AG04450 (cell line): ENCODE measurements at regions of chr12 and their contacts with region 1.

Region 1: GRCh38 chr12:14884458-14884878 is 1.2 kb downstream of the MGP start:
- DNase-seq: peak; percentile 36
- H3K4me3 ChIP-seq: no peak overlapping the region
- H3K27ac ChIP-seq: no peak overlapping the region
- H3K27me3 ChIP-seq: no peaks in the 10 kb centered on the region
- CTCF ChIP-seq: no peak

Region 2: DNA sequence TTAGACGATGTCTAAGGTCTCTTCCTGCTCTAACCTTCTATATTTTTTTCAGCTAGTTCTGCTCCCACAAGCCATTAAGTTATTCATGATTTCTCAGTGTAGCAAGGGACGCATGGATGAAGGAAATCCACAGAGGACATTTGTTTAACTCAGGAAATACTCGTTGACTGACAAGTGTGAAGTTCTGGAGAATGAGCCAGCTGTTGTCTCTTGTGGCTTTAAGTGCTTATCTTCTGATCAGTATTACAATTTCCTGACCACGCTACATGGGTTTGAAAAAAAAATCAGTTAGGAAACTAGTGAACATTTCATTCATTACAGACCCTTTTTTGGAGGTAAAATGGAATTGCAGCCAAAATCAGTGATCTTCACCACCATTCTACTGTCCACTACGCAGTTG is 241.2 kb before region 1 on chr12:
- CTCF ChIA-PET with region 1: no interaction called
- POLR2A ChIA-PET with region 1: interaction called, 11 read pairs
- DNase-seq: no peak
- H3K4me3 ChIP-seq: no peak overlapping the region
- H3K27ac ChIP-seq: no peak overlapping the region
- H3K27me3 ChIP-seq: no peaks in the 10 kb centered on the region
- CTCF ChIP-seq: no peak

Region 3: GRCh38 chr12:14810953-14811483 is 73.5 kb before region 1 on chr12:
- CTCF ChIA-PET with region 1: no interaction called
- POLR2A ChIA-PET with region 1: no interaction called
- DNase-seq: no peak
- H3K4me3 ChIP-seq: no peak overlapping the region
- H3K27ac ChIP-seq: no peak overlapping the region
- H3K27me3 ChIP-seq: no peaks in the 10 kb centered on the region
- CTCF ChIP-seq: peak; percentile 61

Region 4: GRCh38 chr12:14873440-14874185 is 10.9 kb before region 1 on chr12:
- CTCF ChIA-PET with region 1: no interaction called
- POLR2A ChIA-PET with region 1: no interaction called
- DNase-seq: no peak
- H3K4me3 ChIP-seq: no peak overlapping the region
- H3K27ac ChIP-seq: no peak overlapping the region
- H3K27me3 ChIP-seq: no peaks in the 10 kb centered on the region
- CTCF ChIP-seq: no peak

Region 5: DNA sequence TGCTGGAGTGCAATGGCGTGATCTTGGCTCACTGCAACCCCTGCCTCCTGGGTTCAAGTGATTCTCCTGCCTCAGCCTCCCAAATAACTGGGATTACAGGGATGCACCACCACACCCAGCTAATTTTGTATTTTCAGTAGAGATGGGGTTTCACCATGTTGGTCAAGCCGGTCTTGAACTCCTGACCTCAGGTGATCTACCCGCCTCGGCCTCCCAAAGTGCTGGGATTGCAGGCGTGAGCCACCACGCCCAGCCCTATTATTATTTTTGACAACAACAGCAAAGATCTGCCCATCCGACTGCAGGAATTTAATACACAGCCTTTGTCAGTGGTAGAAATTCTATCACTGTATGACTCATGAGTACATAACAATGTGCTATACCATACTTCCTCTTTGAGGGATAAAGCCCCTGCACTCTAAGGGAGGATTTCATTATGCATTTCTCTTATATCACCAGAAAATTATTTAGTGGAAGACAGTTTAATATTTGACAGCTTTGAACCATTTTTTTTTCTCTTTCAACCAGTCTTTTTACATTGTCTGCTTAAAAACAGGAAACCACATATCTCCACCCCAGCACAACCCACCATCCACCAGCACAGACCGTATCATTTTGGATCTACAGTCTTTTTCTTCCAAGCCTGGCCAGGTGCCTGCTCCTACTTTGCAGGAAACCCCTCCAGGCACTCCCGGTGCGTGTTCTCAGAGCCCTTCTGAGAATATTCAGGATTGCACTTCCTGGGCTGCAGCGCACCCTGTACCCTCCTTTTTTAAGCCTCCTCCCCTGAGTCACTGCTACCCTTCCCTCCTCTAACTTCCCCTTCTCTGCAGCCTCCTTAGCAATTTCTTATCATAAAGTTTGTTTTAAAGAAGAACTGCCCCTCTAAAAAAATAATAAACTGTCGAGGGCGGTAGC is 76.3 kb after region 1 on chr12:
- CTCF ChIA-PET with region 1: interaction called, 10 read pairs
- POLR2A ChIA-PET with region 1: no interaction called
- DNase-seq: no peak
- H3K4me3 ChIP-seq: no peak overlapping the region
- H3K27ac ChIP-seq: no peak overlapping the region
- H3K27me3 ChIP-seq: no peaks in the 10 kb centered on the region
- CTCF ChIP-seq: no peak